ENCODE measurements at regions of chr11 and their contacts with region 1.

Region 1: DNA sequence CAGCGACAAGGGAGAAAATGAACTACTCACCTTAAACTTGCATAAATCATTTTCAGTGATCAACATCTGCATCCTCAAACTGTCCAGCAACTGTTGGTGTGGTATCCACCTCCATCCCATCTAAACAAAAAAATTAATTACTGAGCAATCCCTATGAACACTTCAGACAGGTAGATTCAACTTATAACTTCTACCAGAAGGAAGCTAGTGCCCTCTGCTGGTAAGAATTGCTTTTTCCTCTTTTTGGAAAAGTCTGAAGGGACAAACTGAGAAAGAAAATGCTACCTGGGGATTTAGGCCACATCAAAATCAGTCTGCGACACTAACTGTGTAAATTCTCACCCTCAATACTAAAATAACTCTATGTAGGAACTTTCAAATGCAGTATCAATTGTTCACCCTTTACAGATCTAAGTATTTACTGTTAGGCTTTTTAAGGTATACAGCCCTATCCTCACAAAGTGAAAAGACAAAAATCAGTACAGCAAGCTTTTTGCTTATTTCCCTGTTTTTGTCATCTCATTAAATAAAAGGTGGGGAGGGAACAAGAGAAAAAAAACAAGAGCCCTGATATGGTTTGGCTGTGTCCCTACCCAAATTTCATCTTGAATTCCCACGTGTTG is 17.9 kb downstream of the CLNS1A start:
- DNase-seq: peak in 1 of 2 experiments; percentile 82
- H3K4me3 ChIP-seq: no peak overlapping the region
- H3K4me3 Mint-ChIP-seq: no peak overlapping the region
- H3K27ac Mint-ChIP-seq: no peak overlapping the region
- H3K4me1 ChIP-seq: no peaks in the 10 kb centered on the region
- H3K4me1 Mint-ChIP-seq: no peaks in the 10 kb centered on the region
- H3K27me3 ChIP-seq: no peaks in the 10 kb centered on the region
- H3K27me3 Mint-ChIP-seq: no peaks in the 10 kb centered on the region
- CTCF ChIP-seq: peak; percentile 85 to 90

Region 2: GRCh38 chr11:77198440-77198849 is 421.2 kb before region 1 on chr11:
- CTCF ChIA-PET with region 1: interaction called, 9 read pairs
- POLR2A ChIA-PET with region 1: no interaction called
- intact Hi-C with region 1: loop called (anchors 1 kb)
- DNase-seq: peak; percentile 68 to 70
- H3K4me3 ChIP-seq: no peak overlapping the region
- H3K4me3 Mint-ChIP-seq: no peak overlapping the region
- H3K27ac Mint-ChIP-seq: no peak overlapping the region
- H3K4me1 ChIP-seq: no peaks in the 10 kb centered on the region
- H3K4me1 Mint-ChIP-seq: no peaks in the 10 kb centered on the region
- H3K27me3 ChIP-seq: no peaks in the 10 kb centered on the region
- H3K27me3 Mint-ChIP-seq: no peaks in the 10 kb centered on the region
- CTCF ChIP-seq: peak; percentile 53 to 72

Region 3: DNA sequence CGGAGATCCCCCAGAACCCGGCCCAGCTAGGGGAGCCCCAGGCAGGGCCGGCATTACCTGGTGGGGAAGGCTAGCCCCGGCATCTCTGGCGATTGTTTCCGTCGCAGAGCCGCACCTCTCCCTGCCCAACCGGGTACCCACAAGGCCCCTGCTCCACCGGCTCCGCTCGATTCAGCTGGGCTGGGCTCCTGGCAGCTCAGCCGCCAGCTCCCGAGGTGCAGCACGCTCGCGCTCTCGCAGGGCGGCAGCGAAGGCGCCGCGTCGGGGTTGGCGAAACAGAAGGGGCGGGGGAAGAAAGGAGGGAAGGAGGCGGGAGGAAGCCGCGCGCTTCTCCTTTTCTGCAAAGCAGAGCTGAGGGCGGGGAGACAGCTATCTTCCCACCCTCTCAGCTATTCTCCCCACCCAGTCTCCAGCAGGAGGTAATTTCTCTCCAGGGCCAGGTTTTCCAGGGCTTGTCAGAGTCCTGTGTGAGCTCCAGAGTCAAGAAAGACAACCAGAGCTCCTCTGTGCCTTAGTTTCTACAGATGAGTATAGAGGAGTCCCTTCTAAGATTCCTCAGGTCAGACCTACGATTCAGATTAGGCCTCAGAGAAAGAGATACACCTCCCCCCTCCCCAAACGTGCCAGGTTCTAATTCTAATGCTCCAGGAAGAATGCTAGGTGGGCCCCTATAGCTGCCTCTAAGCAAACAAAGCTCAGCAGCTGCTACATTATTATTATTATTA is 207.8 kb before region 1 on chr11:
- CTCF ChIA-PET with region 1: no interaction called
- POLR2A ChIA-PET with region 1: no interaction called
- intact Hi-C with region 1: loop called (anchors 1 kb)
- DNase-seq: no peak
- H3K4me3 ChIP-seq: no peak overlapping the region
- H3K4me3 Mint-ChIP-seq: no peak overlapping the region
- H3K27ac Mint-ChIP-seq: no peak overlapping the region
- H3K4me1 ChIP-seq: no peaks in the 10 kb centered on the region
- H3K4me1 Mint-ChIP-seq: peaks cover 6% of the 10 kb centered on the region
- H3K27me3 ChIP-seq: no peaks in the 10 kb centered on the region
- H3K27me3 Mint-ChIP-seq: no peaks in the 10 kb centered on the region
- CTCF ChIP-seq: no peak

Region 4: DNA sequence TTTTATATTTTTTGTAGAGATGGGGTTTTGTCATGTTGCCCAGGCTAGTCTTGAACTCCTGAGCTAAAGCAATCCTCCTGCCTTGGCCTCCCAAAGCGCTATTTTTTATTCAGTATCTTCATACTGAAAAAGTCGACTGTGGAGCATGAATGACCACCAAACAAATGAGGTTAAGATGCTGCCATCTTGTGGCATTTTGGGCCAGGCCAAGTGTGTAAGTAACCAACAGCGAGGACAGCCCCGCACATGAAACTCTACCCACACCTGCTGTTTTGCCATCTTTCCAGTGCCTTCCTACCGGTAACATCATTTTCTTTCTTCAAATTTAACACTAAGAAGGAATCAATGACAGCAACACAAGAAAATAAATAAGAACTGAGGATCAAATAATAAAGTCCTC is 62.1 kb before region 1 on chr11:
- CTCF ChIA-PET with region 1: no interaction called
- POLR2A ChIA-PET with region 1: no interaction called
- intact Hi-C with region 1: no loop called
- DNase-seq: peak in 1 of 2 experiments; percentile 43
- H3K4me3 ChIP-seq: no peak overlapping the region
- H3K4me3 Mint-ChIP-seq: no peak overlapping the region
- H3K27ac Mint-ChIP-seq: no peak overlapping the region
- H3K4me1 ChIP-seq: peaks cover 42% of the 10 kb centered on the region
- H3K4me1 Mint-ChIP-seq: peaks cover 27% of the 10 kb centered on the region
- H3K27me3 ChIP-seq: no peaks in the 10 kb centered on the region
- H3K27me3 Mint-ChIP-seq: no peaks in the 10 kb centered on the region
- CTCF ChIP-seq: peak; percentile 38 to 45

Region 5: GRCh38 chr11:77596626-77597025 is 23.1 kb before region 1 on chr11:
- CTCF ChIA-PET with region 1: no interaction called
- POLR2A ChIA-PET with region 1: no interaction called
- intact Hi-C with region 1: no loop called
- DNase-seq: no peak
- H3K4me3 ChIP-seq: no peak overlapping the region
- H3K4me3 Mint-ChIP-seq: no peak overlapping the region
- H3K27ac Mint-ChIP-seq: no peak overlapping the region
- H3K4me1 ChIP-seq: peaks cover 16% of the 10 kb centered on the region
- H3K4me1 Mint-ChIP-seq: peaks cover 33% of the 10 kb centered on the region
- H3K27me3 ChIP-seq: no peaks in the 10 kb centered on the region
- H3K27me3 Mint-ChIP-seq: no peaks in the 10 kb centered on the region
- CTCF ChIP-seq: no peak

Measured in Caco-2 (cell line).